Left cardiac atrium (tissue), 4 donors: ENCODE measurements at regions of chr1 and their contacts with region 1.

Region 1: DNA sequence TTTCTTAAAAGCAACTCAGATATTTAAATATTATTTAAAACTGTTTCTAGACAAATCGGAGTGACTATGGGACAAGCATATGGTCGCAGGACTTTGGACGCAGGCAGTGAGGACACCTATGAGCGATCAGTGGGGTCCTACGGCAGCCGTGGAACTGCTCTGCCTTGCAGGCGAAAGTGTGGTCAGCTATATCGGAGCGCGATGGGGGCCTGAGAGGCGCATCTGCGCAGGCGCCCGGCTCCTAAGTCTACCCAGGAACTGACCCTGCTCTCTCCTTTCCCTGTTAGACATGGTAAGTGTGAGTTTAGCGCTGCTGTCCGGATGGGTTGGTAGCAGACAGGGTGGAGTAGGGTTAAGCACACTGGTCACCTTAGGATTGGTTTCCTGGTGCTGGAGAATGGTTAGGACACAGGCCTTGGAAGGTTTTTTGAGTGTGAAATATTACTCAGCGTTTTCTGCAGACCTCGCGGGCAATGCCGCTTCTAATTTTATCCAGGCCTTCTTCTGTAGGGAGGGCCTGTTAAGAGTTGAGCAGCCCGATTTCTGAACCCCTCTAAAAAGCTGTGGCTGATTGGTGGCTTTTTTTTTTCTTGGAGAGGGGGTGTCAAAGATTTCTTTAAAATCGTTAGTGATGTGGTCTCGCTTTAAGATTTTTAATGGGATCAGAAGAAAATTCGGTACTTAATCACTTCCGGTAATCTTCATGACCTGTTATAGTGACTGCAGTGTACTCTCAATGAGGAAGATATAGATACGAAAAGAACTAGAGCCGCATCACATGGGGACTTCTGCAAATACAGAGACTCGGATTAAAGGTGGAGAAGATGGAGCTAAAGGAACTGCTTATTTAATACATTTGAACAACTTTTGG is at the start of gene RABGGTB:
- DNase-seq: peak; percentile 95
- ATAC-seq: peak; percentile 98 to 99
- total RNA-seq, gene RABGGTB: 46.8 to 71.8 TPM

Region 2: GRCh38 chr1:75615613-75616435 is 170.4 kb before region 1 on chr1:
- intact Hi-C with region 1: no loop called
- DNase-seq: peak; percentile 44
- ATAC-seq: peak; percentile 79 to 91

Region 3: GRCh38 chr1:75724472-75725022 is 61.7 kb before region 1 on chr1 and contains the start of gene ACADM:
- intact Hi-C with region 1: loop called in 1 of 2 experiments (anchors 5 kb)
- DNase-seq: peak; percentile 91
- ATAC-seq: peak; percentile 98 to 99
- total RNA-seq, gene ACADM: 164 to 212 TPM